Activated CD4-positive, alpha-beta memory T cell treated with anti-CD3 and anti-CD28 coated beads for 36 hours (primary cell): ENCODE measurements at regions of chr5 and their contacts with region 1.

Region 1: DNA sequence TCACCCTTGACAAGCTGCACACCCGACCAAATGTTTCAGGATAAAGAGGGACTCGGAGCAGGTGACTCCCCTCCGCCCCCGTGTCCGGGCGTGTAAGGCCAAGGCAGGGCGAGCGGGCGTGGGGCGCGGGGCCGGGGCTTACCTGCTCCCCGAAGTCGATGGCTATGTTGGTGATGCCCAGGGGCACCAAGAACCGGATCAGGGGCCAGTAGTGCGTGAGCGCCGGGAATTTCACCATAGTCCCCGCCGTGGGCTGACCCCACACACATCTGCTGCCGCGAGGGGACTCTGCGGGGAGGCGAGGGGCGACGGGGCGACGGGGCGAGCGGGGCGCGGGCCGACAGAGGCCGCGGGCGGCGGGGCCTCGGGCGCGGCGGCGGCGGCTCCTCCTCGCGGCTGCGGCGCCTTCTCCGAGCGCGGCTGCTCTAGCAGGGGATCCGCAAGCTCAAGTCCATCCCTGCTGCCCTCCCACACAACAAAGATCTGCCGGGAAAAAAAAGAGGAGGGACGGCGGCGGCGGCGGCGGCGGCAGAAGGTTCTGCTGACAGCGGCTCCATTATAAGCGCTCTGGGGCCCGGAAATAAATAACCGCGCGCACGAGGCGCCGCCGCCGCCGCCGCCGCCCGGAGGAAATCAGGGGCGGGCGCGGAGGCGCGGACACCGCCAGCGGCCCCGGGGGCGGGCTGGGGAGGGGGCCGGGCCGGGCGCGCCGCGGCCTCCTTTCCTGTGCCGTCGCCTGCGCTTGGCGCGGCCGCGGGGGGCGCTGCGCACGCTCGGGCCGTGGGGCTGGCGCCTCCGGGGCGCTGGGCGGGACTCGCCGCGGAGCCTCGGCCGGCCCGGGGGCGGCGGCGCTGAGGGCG is at the start of gene ANKH:
- DNase-seq: peak; percentile 86
- H3K4me3 Mint-ChIP-seq: peak within 1 kb of the TSS; percentile 96
- H3K27ac Mint-ChIP-seq: peak within 1 kb of the TSS; percentile 89
- H3K4me1 Mint-ChIP-seq: peaks cover 28% of the 10 kb centered on the region
- H3K27me3 Mint-ChIP-seq: no peaks in the 10 kb centered on the region
- total RNA-seq, gene ANKH: 123 to 128 TPM

Region 2: DNA sequence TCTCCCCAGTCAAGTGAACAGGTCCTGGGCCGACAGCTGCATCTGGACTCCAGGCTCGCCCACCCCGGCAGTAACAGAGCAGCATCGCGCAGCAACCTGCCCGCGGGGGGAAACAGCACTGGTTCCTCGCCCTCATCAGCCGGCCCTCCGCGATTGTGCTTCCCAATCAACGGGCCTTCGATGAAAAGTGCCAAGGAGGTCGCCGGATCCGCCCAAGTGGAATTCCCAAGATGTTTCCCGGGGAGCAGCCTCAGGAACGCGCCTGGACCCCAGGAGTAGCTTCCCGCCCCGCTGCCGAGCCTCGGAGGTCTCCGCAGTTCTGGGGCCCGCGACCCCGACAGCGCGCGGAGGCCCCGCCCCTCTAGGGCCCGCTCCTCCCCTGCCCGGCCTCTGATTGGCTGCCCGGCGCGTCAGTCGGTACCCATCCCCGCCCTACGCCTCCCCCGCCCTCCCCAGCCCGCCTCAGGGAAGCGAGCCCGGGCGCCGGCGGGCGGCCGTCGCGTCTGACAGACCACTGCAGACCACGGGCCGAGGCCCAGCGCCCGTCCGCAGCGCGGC is 290.0 kb before region 1 on chr5 and contains the start of gene OTULINL:
- CTCF ChIA-PET with region 1: no interaction called
- POLR2A ChIA-PET with region 1: no interaction called
- intact Hi-C with region 1: loop called (anchors 1 kb)
- DNase-seq: peak; percentile 91
- H3K4me3 Mint-ChIP-seq: peak within 1 kb of the TSS; percentile 77
- H3K27ac Mint-ChIP-seq: no peak within 1 kb of the TSS
- H3K4me1 Mint-ChIP-seq: peaks cover 27% of the 10 kb centered on the region
- H3K27me3 Mint-ChIP-seq: peaks cover 9% of the 10 kb centered on the region
- total RNA-seq, gene OTULINL: 12.2 to 12.3 TPM

Region 3: GRCh38 chr5:14706615-14707021 is 164.8 kb before region 1 on chr5:
- CTCF ChIA-PET with region 1: interaction called, 6 read pairs
- POLR2A ChIA-PET with region 1: interaction called, 3 read pairs
- intact Hi-C with region 1: loop called (anchors 1 kb)
- DNase-seq: peak; percentile 56
- H3K4me3 Mint-ChIP-seq: peak overlapping the region; percentile 57
- H3K27ac Mint-ChIP-seq: peak overlapping the region; percentile 94
- H3K4me1 Mint-ChIP-seq: peaks cover 74% of the 10 kb centered on the region
- H3K27me3 Mint-ChIP-seq: no peaks in the 10 kb centered on the region

Region 4: DNA sequence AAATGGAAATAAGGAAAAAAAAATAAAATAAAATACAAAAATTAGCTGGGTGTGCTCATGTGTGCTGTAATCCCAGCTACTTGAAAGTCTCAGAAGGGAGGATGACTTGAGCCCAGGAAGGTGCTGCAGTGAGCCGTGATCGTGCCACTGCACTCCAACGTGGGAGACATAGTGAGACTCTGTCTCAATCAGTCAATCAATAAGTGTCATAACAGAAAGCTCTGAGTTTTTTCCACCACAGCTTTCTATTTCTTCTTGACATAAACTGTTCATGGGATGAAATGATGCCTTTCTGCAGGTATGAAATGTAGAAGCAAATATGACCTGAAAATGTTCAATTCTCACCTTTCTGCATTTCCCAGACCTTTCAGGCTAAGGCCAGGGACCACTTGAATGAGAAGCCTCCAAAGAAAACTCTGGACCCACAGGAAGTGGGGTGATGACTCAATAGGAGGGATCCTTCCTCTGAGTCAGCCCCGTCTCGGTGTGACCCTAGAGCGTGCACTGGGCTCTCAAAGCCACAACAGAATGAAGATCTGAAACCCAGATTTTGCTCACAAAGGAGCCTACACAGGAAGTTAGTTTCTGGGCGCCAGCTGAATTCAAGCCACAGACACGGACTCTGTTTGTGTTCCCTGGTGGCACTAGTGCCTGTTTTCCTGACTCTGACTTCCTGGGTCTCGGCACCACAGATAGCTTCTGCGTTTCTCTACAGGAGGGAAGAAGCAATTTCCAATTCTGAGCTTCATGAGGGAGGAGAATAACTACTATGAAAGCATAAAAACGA is 61.9 kb before region 1 on chr5:
- CTCF ChIA-PET with region 1: interaction called, 6 read pairs
- POLR2A ChIA-PET with region 1: interaction called, 26 read pairs
- intact Hi-C with region 1: loop called (anchors 1 kb)
- DNase-seq: peak; percentile 90
- H3K4me3 Mint-ChIP-seq: peak overlapping the region; percentile 74
- H3K27ac Mint-ChIP-seq: peak overlapping the region; percentile 80
- H3K4me1 Mint-ChIP-seq: peaks cover 57% of the 10 kb centered on the region
- H3K27me3 Mint-ChIP-seq: no peaks in the 10 kb centered on the region

Region 5: GRCh38 chr5:14914603-14915277 is 43.3 kb after region 1 on chr5:
- CTCF ChIA-PET with region 1: no interaction called
- POLR2A ChIA-PET with region 1: no interaction called
- intact Hi-C with region 1: loop called (anchors 2 kb)
- DNase-seq: no peak
- H3K4me3 Mint-ChIP-seq: no peak overlapping the region
- H3K27ac Mint-ChIP-seq: no peak overlapping the region
- H3K4me1 Mint-ChIP-seq: peaks cover 16% of the 10 kb centered on the region
- H3K27me3 Mint-ChIP-seq: no peaks in the 10 kb centered on the region

Region 6: DNA sequence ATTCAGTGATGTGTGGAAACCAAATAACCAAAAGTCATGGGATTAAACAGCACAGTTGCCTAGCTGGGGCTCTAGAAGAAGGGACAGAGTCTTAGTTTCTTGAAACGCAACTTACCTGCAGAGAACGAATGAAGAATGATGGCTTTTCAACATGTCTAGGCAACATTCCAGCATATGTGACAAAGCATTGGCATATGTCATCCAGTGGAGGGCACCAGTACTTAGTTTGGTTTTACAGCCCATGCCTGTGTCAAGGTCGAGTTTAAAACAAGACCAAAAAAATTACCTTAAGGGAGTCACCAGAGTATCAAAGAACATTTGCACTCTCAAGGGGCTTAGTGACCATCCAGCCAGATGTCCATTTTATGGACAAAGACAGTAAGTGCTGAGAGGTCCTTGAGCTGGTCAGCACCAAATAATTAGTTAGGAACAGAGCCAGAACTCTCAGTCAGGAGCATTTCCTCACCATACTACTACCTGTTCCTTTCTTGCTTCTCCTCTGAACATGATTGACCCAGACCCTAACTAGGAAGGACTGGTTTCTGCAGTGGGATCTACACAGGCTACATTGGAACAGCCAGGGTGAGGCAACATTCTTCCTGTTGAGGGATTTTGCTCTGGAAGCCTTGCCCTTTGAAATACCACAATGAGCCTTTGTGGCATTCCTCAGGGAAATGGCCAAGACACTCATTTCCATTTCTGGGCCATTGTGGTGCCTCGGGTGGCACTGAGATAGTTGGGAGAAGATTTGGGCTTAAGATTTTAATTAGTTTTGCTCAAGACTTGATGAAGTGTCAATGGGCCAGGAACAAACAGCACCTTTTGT is 75.6 kb after region 1 on chr5:
- CTCF ChIA-PET with region 1: no interaction called
- POLR2A ChIA-PET with region 1: no interaction called
- intact Hi-C with region 1: loop called (anchors 5 kb)
- DNase-seq: peak; percentile 42
- H3K4me3 Mint-ChIP-seq: no peak overlapping the region
- H3K27ac Mint-ChIP-seq: peak overlapping the region; percentile 26
- H3K4me1 Mint-ChIP-seq: peaks cover 15% of the 10 kb centered on the region
- H3K27me3 Mint-ChIP-seq: peaks cover 7% of the 10 kb centered on the region

Region 7: DNA sequence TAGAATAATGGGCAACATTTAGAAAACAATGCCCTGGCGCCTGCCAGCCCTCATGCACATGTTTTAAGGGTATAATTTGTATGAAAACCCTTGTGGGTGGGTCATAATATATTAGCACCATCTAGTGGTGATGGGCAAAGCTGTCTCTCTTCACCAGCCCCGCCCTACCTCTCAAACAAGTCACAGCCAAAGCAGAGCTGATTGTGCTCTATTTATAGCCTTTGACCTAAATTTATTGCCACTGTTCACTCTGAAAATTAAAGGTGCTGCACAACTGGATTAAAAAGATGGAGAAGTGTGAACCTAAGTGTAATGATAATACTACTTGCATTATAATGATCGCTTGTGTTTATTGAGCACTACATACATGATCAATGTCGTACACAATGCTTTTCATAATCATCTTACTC is 132.1 kb after region 1 on chr5:
- CTCF ChIA-PET with region 1: interaction called, 10 read pairs
- POLR2A ChIA-PET with region 1: interaction called, 3 read pairs
- intact Hi-C with region 1: no loop called
- DNase-seq: peak; percentile 68
- H3K4me3 Mint-ChIP-seq: no peak overlapping the region
- H3K27ac Mint-ChIP-seq: no peak overlapping the region
- H3K4me1 Mint-ChIP-seq: peaks cover 6% of the 10 kb centered on the region
- H3K27me3 Mint-ChIP-seq: peaks cover 2% of the 10 kb centered on the region